ENCODE measurements at regions of chr14 and their contacts with region 1.

Region 1: DNA sequence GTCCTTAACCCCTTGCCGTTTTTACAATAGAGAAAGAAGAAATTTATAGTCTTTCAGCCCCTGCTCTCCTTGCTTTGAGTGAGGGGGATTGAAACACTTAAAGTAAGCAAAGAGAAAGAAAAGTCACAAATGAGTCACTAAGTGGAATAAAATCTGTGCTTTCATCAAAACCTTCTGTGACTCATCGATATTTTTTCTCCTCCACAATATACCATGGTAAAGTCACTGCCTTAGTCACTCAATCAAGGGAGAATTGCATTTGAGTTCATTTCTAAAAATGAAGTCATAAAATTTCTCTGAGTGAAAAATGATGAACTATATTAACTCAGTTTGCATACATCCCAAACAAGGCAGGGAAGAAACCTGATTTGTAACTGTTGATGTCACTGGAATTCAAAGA is 470.3 kb downstream of the FOXG1 start:
- DNase-seq: peak; percentile 80
- H3K4me3 ChIP-seq: peak overlapping the region in 1 of 3 experiments; percentile 16
- H3K27ac ChIP-seq: peak overlapping the region; percentile 79
- H3K4me1 ChIP-seq: peaks cover 62% of the 10 kb centered on the region
- H3K27me3 ChIP-seq: no peaks in the 10 kb centered on the region
- CTCF ChIP-seq: no peak
- POLR2A ChIP-seq: no peak

Region 2: GRCh38 chr14:29271669-29272068 is 34.8 kb after region 1 on chr14:
- CTCF ChIA-PET with region 1: no interaction called
- POLR2A ChIA-PET with region 1: no interaction called
- dilution Hi-C with region 1: no loop called
- intact Hi-C with region 1: loop called (anchors 2 kb)
- DNase-seq: peak; percentile 49
- H3K4me3 ChIP-seq: no peak overlapping the region
- H3K27ac ChIP-seq: peak overlapping the region; percentile 45
- H3K4me1 ChIP-seq: peaks cover 15% of the 10 kb centered on the region
- H3K27me3 ChIP-seq: no peaks in the 10 kb centered on the region
- CTCF ChIP-seq: no peak
- POLR2A ChIP-seq: no peak

Region 3: DNA sequence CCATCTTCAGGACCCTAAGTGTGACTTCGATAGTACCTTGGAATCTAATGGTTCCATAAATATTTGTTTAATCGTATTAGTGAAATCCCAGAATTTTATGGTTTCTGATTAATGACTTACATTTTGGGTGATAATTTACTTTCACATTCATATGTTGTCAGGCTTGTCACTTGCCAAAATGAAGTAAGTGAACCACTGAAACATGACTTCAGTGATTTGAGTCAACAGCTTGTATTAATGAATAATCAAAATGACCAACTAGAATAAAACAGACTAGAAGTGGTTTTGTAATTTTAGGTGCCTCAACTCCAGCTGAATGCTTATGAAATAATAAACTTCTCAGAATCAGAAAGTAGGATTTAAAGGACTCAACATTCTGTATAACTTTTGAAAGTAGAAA is 173.7 kb after region 1 on chr14:
- CTCF ChIA-PET with region 1: no interaction called
- POLR2A ChIA-PET with region 1: no interaction called
- dilution Hi-C with region 1: no loop called
- intact Hi-C with region 1: no loop called
- DNase-seq: no peak
- H3K4me3 ChIP-seq: no peak overlapping the region
- H3K27ac ChIP-seq: no peak overlapping the region
- H3K4me1 ChIP-seq: no peaks in the 10 kb centered on the region
- H3K27me3 ChIP-seq: no peaks in the 10 kb centered on the region
- CTCF ChIP-seq: no peak
- POLR2A ChIP-seq: no peak